ENCODE measurements at regions of chr10 and their contacts with region 1.

Region 1: GRCh38 chr10:92848441-92849233 is at the start of gene EXOC6:
- DNase-seq: peak; percentile 20
- ATAC-seq: peak; percentile 90
- H3K4me3 ChIP-seq: peak within 1 kb of the TSS; percentile 93
- H3K27ac ChIP-seq: peak within 1 kb of the TSS; percentile 75
- H3K4me1 ChIP-seq: peaks cover 17% of the 10 kb centered on the region
- H3K27me3 ChIP-seq: no peaks in the 10 kb centered on the region
- CTCF ChIP-seq: peak in 2 of 3 experiments; percentile 12 to 13; a peak in 2 of 6 replicates
- EP300 ChIP-seq: no peak
- POLR2A ChIP-seq: peak; percentile 89
- RAD21 ChIP-seq: no peak
- polyA plus RNA-seq, gene EXOC6: 8.2 to 8.4 TPM

Region 2: DNA sequence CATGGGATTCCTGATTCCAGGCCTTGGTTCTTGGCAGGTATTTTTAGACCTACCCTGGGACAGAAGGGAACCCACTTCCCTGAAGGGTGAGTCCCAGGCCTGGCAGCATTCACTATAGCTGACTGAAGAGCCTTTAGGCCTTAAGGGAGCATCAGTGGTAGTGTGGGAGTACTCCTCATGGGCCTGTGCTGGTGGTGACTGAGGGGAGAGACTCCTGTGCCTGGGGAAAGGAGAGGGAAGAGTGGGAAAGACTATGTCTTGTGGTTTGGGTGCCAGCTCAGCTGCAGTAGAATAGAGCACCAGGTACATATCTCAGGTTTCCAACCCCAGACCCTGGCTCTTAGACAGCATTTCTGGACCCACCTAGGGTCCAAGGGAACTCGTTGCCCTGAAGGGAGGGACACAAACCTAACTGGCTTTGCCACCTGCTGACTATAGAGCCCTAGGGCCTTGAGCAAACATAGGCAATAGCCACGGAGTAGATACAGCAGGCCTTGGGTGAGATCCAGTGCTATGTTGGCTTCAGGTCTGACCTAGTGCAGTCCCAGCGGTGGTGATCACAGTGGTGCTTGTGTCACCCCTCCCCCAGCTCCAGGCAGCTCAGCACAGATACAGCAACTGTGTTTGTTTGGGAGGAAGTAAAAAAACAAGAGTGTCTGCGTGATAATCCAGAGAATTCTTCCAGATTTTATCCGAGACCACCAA is 1060.3 kb before region 1 on chr10:
- CTCF ChIA-PET with region 1: no interaction called
- POLR2A ChIA-PET with region 1: no interaction called
- RAD21 ChIA-PET with region 1: no interaction called
- SMC1A ChIA-PET with region 1: no interaction called
- in situ Hi-C with region 1: no loop called
- intact Hi-C with region 1: no loop called
- DNase-seq: no peak
- ATAC-seq: no peak
- H3K4me3 ChIP-seq: no peak overlapping the region
- H3K27ac ChIP-seq: no peak overlapping the region
- H3K4me1 ChIP-seq: no peaks in the 10 kb centered on the region
- H3K27me3 ChIP-seq: peaks cover 0 to 2% of the 10 kb centered on the region in 2 experiments; a peak in 2 of 4 replicates
- CTCF ChIP-seq: no peak
- EP300 ChIP-seq: no peak
- POLR2A ChIP-seq: no peak
- RAD21 ChIP-seq: no peak

Region 3: GRCh38 chr10:92592761-92593618 is 255.6 kb before region 1 on chr10 and contains the start of gene KIF11:
- CTCF ChIA-PET with region 1: interaction called, 18 read pairs
- POLR2A ChIA-PET with region 1: interaction called, 4 read pairs
- RAD21 ChIA-PET with region 1: interaction called, 9 read pairs
- SMC1A ChIA-PET with region 1: interaction called, 3 read pairs
- in situ Hi-C with region 1: no loop called
- intact Hi-C with region 1: loop called (anchors 10 kb)
- DNase-seq: peak; percentile 88
- ATAC-seq: peak; percentile 81
- H3K4me3 ChIP-seq: peak within 1 kb of the TSS; percentile 88
- H3K27ac ChIP-seq: peak within 1 kb of the TSS; percentile 95
- H3K4me1 ChIP-seq: peaks cover 7% of the 10 kb centered on the region
- H3K27me3 ChIP-seq: no peaks in the 10 kb centered on the region
- CTCF ChIP-seq: no peak
- EP300 ChIP-seq: peak in 1 of 2 experiments; percentile 10; a peak in 1 of 4 replicates
- POLR2A ChIP-seq: peak; percentile 88
- RAD21 ChIP-seq: no peak
- polyA plus RNA-seq, gene KIF11: 14.1 to 17.9 TPM

Region 4: DNA sequence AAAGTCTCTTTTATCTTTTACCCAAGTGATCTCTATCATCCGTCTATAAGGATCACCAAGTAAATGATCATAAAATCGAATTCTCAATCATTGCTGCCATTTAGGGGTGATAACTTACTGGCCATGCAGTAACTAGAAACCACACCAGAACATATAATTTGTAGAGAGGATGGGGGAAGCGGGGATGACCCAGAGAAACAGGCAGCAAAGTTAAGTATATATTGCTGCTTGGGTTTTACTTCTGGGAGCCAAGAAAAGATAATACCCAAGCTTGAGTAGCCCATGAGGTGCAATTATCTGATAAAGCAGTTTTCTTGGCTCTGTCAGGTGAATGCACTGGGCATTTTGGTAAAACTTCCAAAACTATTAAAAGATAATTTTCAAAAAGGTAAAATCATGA is 18.6 kb after region 1 on chr10:
- CTCF ChIA-PET with region 1: interaction called, 26 read pairs
- POLR2A ChIA-PET with region 1: interaction called, 3 read pairs
- RAD21 ChIA-PET with region 1: no interaction called
- SMC1A ChIA-PET with region 1: interaction called, 4 read pairs
- in situ Hi-C with region 1: no loop called
- intact Hi-C with region 1: no loop called
- DNase-seq: no peak
- ATAC-seq: no peak
- H3K4me3 ChIP-seq: no peak overlapping the region
- H3K27ac ChIP-seq: no peak overlapping the region
- H3K4me1 ChIP-seq: no peaks in the 10 kb centered on the region
- H3K27me3 ChIP-seq: no peaks in the 10 kb centered on the region
- CTCF ChIP-seq: no peak
- EP300 ChIP-seq: no peak
- POLR2A ChIP-seq: no peak
- RAD21 ChIP-seq: no peak

Region 5: GRCh38 chr10:92873029-92873428 is 24.4 kb after region 1 on chr10:
- CTCF ChIA-PET with region 1: interaction called, 42 read pairs
- POLR2A ChIA-PET with region 1: interaction called, 3 read pairs
- RAD21 ChIA-PET with region 1: interaction called, 3 read pairs
- SMC1A ChIA-PET with region 1: interaction called, 9 read pairs
- in situ Hi-C with region 1: no loop called
- intact Hi-C with region 1: no loop called
- DNase-seq: no peak
- ATAC-seq: no peak
- H3K4me3 ChIP-seq: no peak overlapping the region
- H3K27ac ChIP-seq: no peak overlapping the region
- H3K4me1 ChIP-seq: no peaks in the 10 kb centered on the region
- H3K27me3 ChIP-seq: no peaks in the 10 kb centered on the region
- CTCF ChIP-seq: no peak
- EP300 ChIP-seq: no peak
- POLR2A ChIP-seq: no peak
- RAD21 ChIP-seq: no peak

Region 6: DNA sequence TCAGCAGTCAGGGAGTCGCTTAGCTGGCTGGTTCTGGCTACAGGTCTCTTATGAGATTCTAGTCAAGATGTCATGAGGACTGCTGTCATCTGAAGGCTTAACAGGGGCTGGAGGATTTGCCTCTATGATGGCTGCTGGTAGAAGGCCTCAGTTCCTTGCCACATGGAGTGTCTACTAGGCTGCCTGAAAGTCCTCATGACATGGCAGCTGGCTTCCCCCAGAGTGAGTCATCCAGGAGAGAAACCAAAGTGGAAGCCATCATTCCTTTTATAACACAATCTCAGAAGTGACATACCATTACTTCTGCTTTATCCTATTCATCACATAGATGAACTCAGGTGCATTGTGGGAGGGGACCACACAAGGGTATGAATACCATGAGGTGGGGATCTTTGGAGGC is 74.8 kb after region 1 on chr10:
- CTCF ChIA-PET with region 1: no interaction called
- POLR2A ChIA-PET with region 1: no interaction called
- RAD21 ChIA-PET with region 1: no interaction called
- SMC1A ChIA-PET with region 1: no interaction called
- in situ Hi-C with region 1: no loop called
- intact Hi-C with region 1: no loop called
- DNase-seq: no peak
- ATAC-seq: no peak
- H3K4me3 ChIP-seq: no peak overlapping the region
- H3K27ac ChIP-seq: no peak overlapping the region
- H3K4me1 ChIP-seq: no peaks in the 10 kb centered on the region
- H3K27me3 ChIP-seq: no peaks in the 10 kb centered on the region
- CTCF ChIP-seq: no peak
- EP300 ChIP-seq: no peak
- POLR2A ChIP-seq: no peak
- RAD21 ChIP-seq: no peak

Region 7: DNA sequence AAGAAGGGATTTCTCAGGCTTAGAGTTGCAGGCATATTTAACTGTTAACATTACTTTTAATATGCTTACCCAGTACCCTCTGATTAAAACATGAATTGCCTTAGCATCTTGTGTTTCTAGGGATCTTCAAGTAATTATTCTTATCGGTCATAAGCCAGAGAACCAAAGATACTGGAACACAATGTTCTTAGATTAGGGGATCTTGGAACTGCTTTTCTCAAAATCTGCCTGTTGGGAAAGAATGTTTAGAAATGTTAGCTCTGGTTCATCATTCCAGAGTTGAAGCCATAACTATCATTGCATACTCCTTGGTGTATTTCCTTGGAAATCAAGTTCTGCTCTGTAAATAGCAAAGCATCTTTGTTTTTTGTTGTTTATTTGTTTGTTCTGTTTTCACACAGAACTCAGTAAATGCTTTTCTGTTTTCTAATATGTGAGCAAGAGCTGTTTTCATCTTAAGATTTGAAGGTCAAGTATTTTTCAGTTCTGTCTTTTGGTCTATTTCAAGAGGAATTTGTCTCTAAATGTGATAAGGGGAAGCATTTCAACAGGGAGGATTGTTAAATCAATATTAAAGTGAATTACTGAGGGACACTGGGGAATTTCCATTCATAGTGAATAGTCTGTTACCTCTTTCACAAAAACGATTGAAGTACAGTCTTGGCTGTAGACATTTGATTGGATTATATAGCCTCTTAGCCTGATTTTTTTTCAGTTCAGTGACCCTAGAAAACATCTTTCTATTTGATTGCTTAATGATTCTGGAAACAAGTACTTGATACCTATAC is 108.8 kb after region 1 on chr10:
- CTCF ChIA-PET with region 1: no interaction called
- POLR2A ChIA-PET with region 1: no interaction called
- RAD21 ChIA-PET with region 1: no interaction called
- SMC1A ChIA-PET with region 1: no interaction called
- in situ Hi-C with region 1: no loop called
- intact Hi-C with region 1: no loop called
- DNase-seq: no peak
- ATAC-seq: no peak
- H3K4me3 ChIP-seq: no peak overlapping the region
- H3K27ac ChIP-seq: no peak overlapping the region
- H3K4me1 ChIP-seq: no peaks in the 10 kb centered on the region
- H3K27me3 ChIP-seq: no peaks in the 10 kb centered on the region
- CTCF ChIP-seq: no peak
- EP300 ChIP-seq: no peak
- POLR2A ChIP-seq: no peak
- RAD21 ChIP-seq: no peak

Measured in GM12878 (cell line).